ENCODE measurements at regions of chr22 and their contacts with region 1.

Region 1: GRCh38 chr22:38051900-38052862 is 5.0 kb upstream of the PICK1 start:
- DNase-seq: peak; percentile 81 to 89
- H3K4me3 ChIP-seq: no peak overlapping the region
- H3K27ac ChIP-seq: no peak overlapping the region
- H3K4me1 ChIP-seq: peaks cover 0 to 15% (median 4%) of the 10 kb centered on the region in 4 experiments; a peak in 5 of 7 replicates
- H3K27me3 ChIP-seq: no peaks in the 10 kb centered on the region; a peak in 1 of 7 replicates
- CTCF ChIP-seq: peak; percentile 87 to 97 (median 94)
- EP300 ChIP-seq: peak in 1 of 2 experiments; percentile 21; a peak in 1 of 3 replicates
- POLR2A ChIP-seq: no peak
- RAD21 ChIP-seq: peak; percentile 92 to 95

Region 2: DNA sequence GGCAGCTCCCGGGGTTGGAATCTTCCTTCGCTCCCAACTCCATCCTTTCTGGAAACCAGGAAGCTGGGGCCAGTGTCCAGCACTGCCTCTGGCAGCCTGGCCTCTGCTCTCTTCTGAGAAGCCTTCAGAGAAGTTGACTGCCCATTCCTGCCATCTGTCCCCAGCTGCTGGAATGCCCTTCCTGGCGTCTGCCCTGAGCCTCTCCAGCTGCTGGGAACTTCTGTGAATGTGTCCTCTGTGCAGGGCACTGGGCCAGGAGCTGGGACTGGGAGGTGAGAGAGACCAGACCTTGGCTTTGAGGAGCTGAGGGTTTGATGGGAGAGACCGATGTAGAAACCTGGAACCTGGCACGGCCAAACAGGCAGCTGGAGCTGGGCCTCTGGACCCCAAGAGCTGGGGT is 61.9 kb before region 1 on chr22:
- CTCF ChIA-PET with region 1: interaction called, 17 read pairs
- POLR2A ChIA-PET with region 1: no interaction called
- DNase-seq: no peak
- H3K4me3 ChIP-seq: no peak overlapping the region
- H3K27ac ChIP-seq: no peak overlapping the region
- H3K4me1 ChIP-seq: peaks cover 0 to 6% (median 0%) of the 10 kb centered on the region in 4 experiments; a peak in 3 of 7 replicates
- H3K27me3 ChIP-seq: peaks cover 0 to 3% (median 0%) of the 10 kb centered on the region in 4 experiments; a peak in 3 of 7 replicates
- CTCF ChIP-seq: no peak
- EP300 ChIP-seq: no peak
- POLR2A ChIP-seq: no peak
- RAD21 ChIP-seq: no peak

Region 3: GRCh38 chr22:38034274-38034882 is 17.8 kb before region 1 on chr22:
- CTCF ChIA-PET with region 1: interaction called, 15 read pairs
- POLR2A ChIA-PET with region 1: interaction called, 6 read pairs
- DNase-seq: peak; percentile 56 to 70
- H3K4me3 ChIP-seq: peak overlapping the region in 2 of 4 experiments; percentile 4 to 19; a peak in 2 of 8 replicates
- H3K27ac ChIP-seq: peak overlapping the region; percentile 61; the same call in 1 of the 2 replicates
- H3K4me1 ChIP-seq: peaks cover 0 to 33% (median 22%) of the 10 kb centered on the region in 4 experiments; a peak in 6 of 7 replicates
- H3K27me3 ChIP-seq: peaks cover 0 to 4% (median under 1%) of the 10 kb centered on the region in 4 experiments; a peak in 1 of 7 replicates
- CTCF ChIP-seq: 0 out of 4 replicates have a peak, but pooled peaks of 1 of the 3 experiments have one; percentile 2
- EP300 ChIP-seq: 0 out of 3 replicates have a peak, but pooled peaks of 1 of the 2 experiments have one; percentile 20
- POLR2A ChIP-seq: no peak
- RAD21 ChIP-seq: peak; percentile 7 to 33; a peak in 1 of 4 replicates

Region 4: DNA sequence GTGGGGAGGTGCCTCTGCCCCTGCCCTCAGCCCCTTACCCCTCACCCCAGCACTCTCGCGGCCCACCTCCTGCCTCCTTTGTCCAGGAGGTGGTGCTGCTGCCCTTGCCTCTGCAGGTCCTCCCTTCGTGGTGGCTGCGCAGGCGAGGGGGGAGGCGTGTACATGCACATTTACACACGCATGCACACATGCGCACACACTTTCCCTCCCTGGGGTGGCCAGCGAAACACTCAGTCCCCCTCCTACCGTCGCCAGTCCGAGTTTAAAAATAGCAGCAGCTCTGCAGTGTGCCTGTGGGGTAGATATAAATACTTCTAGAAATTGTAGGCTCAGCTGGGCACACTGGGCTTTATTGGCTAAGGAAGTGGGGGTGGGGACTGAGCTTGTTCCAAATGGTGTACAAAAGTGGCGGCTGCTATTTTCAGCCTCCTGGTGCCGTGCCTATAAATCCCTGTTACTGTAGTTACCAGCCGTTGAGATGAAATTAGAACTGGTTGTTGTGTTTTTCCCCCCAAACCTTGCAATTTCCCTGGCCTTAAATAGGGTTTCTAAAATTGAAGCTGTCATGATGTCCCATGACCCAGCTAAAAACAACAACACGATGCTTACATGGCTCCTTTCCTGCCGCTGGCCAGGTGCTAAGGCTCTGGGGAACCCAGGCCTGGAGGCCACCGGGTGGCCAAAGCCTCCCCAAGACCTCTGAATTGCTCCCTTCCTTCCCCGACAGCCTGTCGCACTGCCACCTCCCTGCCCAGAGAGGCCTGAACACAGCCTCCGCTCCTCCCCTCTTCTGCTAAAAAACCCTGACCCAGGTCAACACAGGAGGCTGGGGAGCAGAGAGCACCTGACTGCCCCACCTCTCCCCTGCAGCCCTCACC is 17.4 kb after region 1 on chr22:
- CTCF ChIA-PET with region 1: interaction called, 151 read pairs
- POLR2A ChIA-PET with region 1: interaction called, 5 read pairs
- DNase-seq: no peak
- H3K4me3 ChIP-seq: no peak overlapping the region
- H3K27ac ChIP-seq: no peak overlapping the region; the same call in 1 of the 2 replicates
- H3K4me1 ChIP-seq: no peaks in the 10 kb centered on the region
- H3K27me3 ChIP-seq: no peaks in the 10 kb centered on the region
- CTCF ChIP-seq: peak; percentile 64 to 88 (median 65)
- EP300 ChIP-seq: no peak
- POLR2A ChIP-seq: no peak
- RAD21 ChIP-seq: peak; percentile 57 to 76; a peak in 3 of 4 replicates

Region 5: GRCh38 chr22:38104084-38104483 is 51.9 kb after region 1 on chr22:
- CTCF ChIA-PET with region 1: interaction called, 184 read pairs
- POLR2A ChIA-PET with region 1: interaction called, 5 read pairs
- DNase-seq: peak in 1 of 2 experiments; percentile 65
- H3K4me3 ChIP-seq: no peak overlapping the region
- H3K27ac ChIP-seq: no peak overlapping the region
- H3K4me1 ChIP-seq: no peaks in the 10 kb centered on the region
- H3K27me3 ChIP-seq: no peaks in the 10 kb centered on the region
- CTCF ChIP-seq: peak; percentile 72 to 81 (median 80)
- EP300 ChIP-seq: no peak
- POLR2A ChIP-seq: no peak
- RAD21 ChIP-seq: peak; percentile 63 to 72

Region 6: DNA sequence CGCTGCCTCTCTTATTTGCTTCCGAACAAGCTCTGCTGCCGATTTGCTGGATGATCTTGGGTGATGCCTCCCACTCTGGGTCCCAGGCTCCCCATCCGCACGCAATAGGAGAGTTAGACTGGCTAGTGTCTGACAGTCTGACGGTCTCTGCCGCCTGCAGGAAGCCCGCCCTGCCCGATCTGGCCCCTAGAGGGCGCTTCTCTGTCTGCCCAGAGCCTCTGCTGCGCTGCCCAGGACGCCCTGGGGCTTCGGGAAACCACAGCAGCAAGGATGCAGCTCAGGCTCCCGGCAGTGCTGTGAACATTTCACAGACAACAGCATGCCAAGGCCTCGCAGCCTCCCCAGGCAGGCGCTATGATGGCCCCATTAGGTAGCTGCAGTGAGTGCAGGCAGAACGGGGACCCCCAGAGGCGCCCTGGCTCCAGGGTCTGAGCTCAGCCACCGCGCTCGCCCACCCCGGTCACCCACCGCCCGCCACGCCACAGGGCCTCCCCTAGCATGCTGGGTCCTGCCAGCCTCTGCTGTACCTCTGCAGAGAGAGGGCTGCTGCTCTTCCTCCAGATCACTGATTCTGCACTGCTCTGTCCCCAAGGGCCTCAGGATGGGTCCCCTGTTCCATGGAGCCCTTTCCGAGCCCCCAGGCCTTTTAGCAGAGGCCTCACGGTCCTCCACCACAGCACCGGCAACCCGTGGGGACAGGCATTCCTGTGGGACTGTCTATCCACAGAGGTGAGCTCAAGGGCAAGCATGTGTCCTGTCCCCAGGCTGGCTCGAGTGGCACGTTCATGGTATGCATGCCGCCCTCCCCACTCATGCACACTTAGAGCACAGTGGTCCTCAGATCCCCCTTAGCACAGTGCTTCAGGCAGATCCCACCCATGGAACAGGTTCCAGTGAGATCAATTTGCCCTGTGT is 62.6 kb after region 1 on chr22:
- CTCF ChIA-PET with region 1: interaction called, 14 read pairs
- POLR2A ChIA-PET with region 1: no interaction called
- DNase-seq: peak in 1 of 2 experiments; percentile 99
- H3K4me3 ChIP-seq: no peak overlapping the region
- H3K27ac ChIP-seq: no peak overlapping the region
- H3K4me1 ChIP-seq: peaks cover 0 to 9% (median 7%) of the 10 kb centered on the region in 4 experiments; a peak in 3 of 7 replicates
- H3K27me3 ChIP-seq: no peaks in the 10 kb centered on the region; a peak in 2 of 7 replicates
- CTCF ChIP-seq: peak; percentile 93 to 98 (median 98)
- EP300 ChIP-seq: no peak; a peak in 1 of 3 replicates
- POLR2A ChIP-seq: no peak
- RAD21 ChIP-seq: peak; percentile 70 to 81

Region 7: DNA sequence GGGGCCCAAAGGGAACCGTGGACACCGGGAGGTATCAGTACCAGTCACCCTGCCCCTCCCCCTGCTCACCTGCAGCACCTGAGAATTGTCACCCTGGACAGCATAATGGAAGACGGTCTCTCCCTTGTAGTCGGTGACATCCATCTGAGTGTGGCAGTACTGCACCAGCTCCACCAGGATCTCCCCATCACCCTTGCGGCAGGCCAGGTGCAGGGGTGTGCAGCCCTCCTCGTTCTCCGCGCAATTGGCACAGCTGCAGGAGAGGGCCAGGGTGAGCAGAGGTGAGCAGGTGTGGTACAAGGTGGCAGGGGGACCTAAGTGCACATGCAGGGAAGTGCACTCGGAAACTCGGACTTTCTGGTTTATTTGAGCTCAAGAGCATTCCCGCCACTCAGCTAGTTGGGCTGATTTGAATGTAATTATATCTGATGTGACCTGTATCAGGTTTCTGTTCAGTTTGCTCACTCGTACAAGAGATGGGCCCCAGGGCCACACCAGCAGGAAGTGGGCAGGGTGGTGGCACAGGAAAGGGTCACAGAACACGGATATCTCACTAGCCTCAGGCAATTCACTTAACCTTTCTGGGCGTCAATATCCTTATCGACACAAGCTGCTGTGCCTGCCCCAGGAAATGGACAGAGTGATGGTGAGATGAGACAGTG is 91.0 kb after region 1 on chr22:
- CTCF ChIA-PET with region 1: interaction called, 17 read pairs
- POLR2A ChIA-PET with region 1: no interaction called
- DNase-seq: no peak
- H3K4me3 ChIP-seq: no peak overlapping the region
- H3K27ac ChIP-seq: no peak overlapping the region
- H3K4me1 ChIP-seq: peaks cover 0 to 3% (median 0%) of the 10 kb centered on the region in 4 experiments; a peak in 3 of 7 replicates
- H3K27me3 ChIP-seq: no peaks in the 10 kb centered on the region
- CTCF ChIP-seq: no peak
- EP300 ChIP-seq: no peak
- POLR2A ChIP-seq: no peak
- RAD21 ChIP-seq: no peak